ENCODE measurements at regions of chr9 and their contacts with region 1.

Region 1: GRCh38 chr9:35267710-35268109 is 105.9 kb downstream of the UNC13B start:
- DNase-seq: no peak
- H3K4me3 ChIP-seq: no peak overlapping the region
- H3K27ac ChIP-seq: no peak overlapping the region
- H3K4me1 ChIP-seq: peaks cover 0 to 15% (median 11%) of the 10 kb centered on the region in 4 donors
- H3K27me3 ChIP-seq: no peaks in the 10 kb centered on the region
- CTCF ChIP-seq: no peak

Region 2: GRCh38 chr9:35470894-35471293 is 203.2 kb after region 1 on chr9:
- intact Hi-C with region 1: loop called (anchors 10 kb)
- DNase-seq: peak; percentile 83 to 85
- H3K4me3 ChIP-seq: peak overlapping the region in 1 of 2 donors; percentile 25
- H3K27ac ChIP-seq: peak overlapping the region; percentile 76 to 88
- H3K4me1 ChIP-seq: peaks cover 0 to 22% (median 8%) of the 10 kb centered on the region in 4 donors
- H3K27me3 ChIP-seq: no peaks in the 10 kb centered on the region
- CTCF ChIP-seq: no peak

Measured in tibial artery (tissue), 4 donors.